Naive thymus-derived CD4-positive, alpha-beta T cell (primary cell): ENCODE measurements at regions of chr7 and their contacts with region 1.

Region 1: GRCh38 chr7:111006691-111007090 is 84.2 kb upstream of the LRRN3 start:
- DNase-seq: no peak
- ATAC-seq: no peak
- H3K4me3 ChIP-seq: no peak overlapping the region
- H3K4me3 Mint-ChIP-seq: no peak overlapping the region
- H3K27ac ChIP-seq: no peak overlapping the region
- H3K27ac Mint-ChIP-seq: no peak overlapping the region
- H3K4me1 ChIP-seq: peaks cover 0 to 44% of the 10 kb centered on the region in 2 donors
- H3K4me1 Mint-ChIP-seq: peaks cover 10 to 34% (median 14%) of the 10 kb centered on the region in 7 donors
- H3K27me3 ChIP-seq: no peaks in the 10 kb centered on the region
- H3K27me3 Mint-ChIP-seq: no peaks in the 10 kb centered on the region

Region 2: DNA sequence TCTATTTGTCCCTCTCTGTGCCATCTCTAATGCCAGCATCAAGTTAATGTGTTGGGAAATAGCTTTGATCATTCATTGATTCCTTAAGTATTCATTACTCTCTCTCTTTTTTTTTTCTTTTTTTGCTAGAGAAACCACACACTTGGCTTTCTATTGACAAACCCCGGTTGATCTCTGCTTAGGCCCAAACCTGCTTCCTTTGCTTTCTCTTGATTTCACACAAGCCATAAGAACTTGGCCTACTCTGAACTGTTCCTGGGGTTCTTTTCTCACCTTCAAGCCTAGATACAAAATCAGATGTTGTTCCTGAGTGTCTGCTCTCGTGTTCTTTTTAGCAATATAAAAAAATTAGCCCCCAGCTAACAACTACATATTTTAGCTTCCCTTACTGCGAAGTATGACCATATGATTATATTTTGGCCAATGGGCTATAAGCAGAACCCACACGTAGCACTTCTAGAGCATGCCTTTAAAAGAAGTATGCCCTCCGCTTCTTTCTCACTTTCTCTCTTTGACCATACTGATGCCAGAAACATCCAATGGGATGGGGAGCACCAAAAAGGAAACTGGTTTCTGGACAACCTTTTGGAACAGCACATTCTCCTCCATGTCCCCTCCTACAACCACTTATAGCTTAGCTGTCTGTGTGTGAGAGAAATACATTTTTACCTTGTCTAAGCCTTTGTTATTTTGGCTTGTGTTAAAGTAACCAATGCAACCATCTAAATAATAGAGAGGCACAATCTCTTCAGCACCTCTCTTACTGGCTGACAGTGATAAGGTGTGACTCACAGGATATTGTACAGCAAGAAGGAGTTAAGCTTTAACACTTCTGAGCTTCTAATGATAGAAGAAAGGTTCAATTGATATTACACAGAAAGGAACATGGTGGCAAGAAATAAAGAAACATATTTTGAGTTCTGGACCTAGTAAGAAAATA is 12.4 kb before region 1 on chr7:
- CTCF ChIA-PET with region 1: interaction called, 3 read pairs
- POLR2A ChIA-PET with region 1: interaction called, 6 read pairs
- intact Hi-C with region 1: loop called in 1 of 2 experiments (anchors 1 kb)
- DNase-seq: peak in 1 of 9 donors; percentile 37
- ATAC-seq: peak; percentile 64
- H3K4me3 ChIP-seq: no peak overlapping the region
- H3K4me3 Mint-ChIP-seq: peak overlapping the region; percentile 8 to 65 (median 54)
- H3K27ac ChIP-seq: peak overlapping the region; percentile 50
- H3K27ac Mint-ChIP-seq: peak overlapping the region; percentile 83 to 93 (median 91)
- H3K4me1 ChIP-seq: peaks cover 0 to 25% of the 10 kb centered on the region in 2 donors
- H3K4me1 Mint-ChIP-seq: peaks cover 18 to 43% (median 40%) of the 10 kb centered on the region in 7 donors
- H3K27me3 ChIP-seq: no peaks in the 10 kb centered on the region
- H3K27me3 Mint-ChIP-seq: no peaks in the 10 kb centered on the region